ENCODE measurements at regions of chr3 and their contacts with region 1.

Region 1: GRCh38 chr3:22565393-22565792 is 637.7 kb upstream of the UBE2E2 start:
- DNase-seq: no peak
- ATAC-seq: no peak
- H3K4me3 ChIP-seq: no peak overlapping the region
- H3K27ac ChIP-seq: no peak overlapping the region
- H3K4me1 ChIP-seq: no peaks in the 10 kb centered on the region
- H3K27me3 ChIP-seq: no peaks in the 10 kb centered on the region
- CTCF ChIP-seq: no peak
- POLR2A ChIP-seq: no peak
- RAD21 ChIP-seq: no peak

Region 2: DNA sequence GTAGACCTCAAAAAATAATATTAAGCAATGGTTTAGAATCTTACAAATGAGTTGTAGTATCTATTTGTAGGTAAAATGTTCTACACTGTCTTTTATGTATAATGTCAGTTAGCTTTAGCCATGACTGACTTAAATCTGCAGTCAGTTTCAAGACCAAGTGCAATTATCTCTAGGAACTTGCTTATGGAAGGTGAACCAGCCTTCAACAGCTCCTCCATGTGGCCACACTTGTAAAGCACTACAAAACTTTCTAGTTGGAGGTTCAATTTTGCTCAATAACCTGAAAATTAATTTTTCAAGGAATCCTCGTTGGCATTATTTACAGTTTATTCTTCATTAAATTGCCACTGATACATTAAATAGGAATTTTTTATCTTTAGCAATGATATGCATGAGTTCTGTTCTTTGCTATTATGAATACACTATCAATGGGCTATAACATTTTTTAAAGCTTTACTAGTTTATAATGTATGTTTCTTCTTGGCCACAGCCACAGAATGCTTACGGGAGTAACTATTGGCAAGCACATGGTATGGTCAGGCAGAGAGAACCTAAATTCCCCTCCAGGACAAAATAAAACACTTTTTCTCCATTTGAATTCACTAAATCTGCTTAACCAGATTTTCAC is 322.4 kb after region 1 on chr3:
- CTCF ChIA-PET with region 1: interaction called, 3 read pairs
- POLR2A ChIA-PET with region 1: no interaction called
- RAD21 ChIA-PET with region 1: no interaction called
- intact Hi-C with region 1: loop called (anchors 2 kb)
- DNase-seq: peak; percentile 4
- ATAC-seq: 0 out of 2 replicates have a peak, but pooled peaks have one; percentile 44
- H3K4me3 ChIP-seq: no peak overlapping the region
- H3K27ac ChIP-seq: no peak overlapping the region
- H3K4me1 ChIP-seq: no peaks in the 10 kb centered on the region
- H3K27me3 ChIP-seq: peaks cover 3% of the 10 kb centered on the region; the same call in 1 of the 2 replicates
- CTCF ChIP-seq: peak in 2 of 3 experiments; percentile 42 to 49; a peak in 4 of 6 replicates
- POLR2A ChIP-seq: no peak
- RAD21 ChIP-seq: peak; percentile 40

Region 3: DNA sequence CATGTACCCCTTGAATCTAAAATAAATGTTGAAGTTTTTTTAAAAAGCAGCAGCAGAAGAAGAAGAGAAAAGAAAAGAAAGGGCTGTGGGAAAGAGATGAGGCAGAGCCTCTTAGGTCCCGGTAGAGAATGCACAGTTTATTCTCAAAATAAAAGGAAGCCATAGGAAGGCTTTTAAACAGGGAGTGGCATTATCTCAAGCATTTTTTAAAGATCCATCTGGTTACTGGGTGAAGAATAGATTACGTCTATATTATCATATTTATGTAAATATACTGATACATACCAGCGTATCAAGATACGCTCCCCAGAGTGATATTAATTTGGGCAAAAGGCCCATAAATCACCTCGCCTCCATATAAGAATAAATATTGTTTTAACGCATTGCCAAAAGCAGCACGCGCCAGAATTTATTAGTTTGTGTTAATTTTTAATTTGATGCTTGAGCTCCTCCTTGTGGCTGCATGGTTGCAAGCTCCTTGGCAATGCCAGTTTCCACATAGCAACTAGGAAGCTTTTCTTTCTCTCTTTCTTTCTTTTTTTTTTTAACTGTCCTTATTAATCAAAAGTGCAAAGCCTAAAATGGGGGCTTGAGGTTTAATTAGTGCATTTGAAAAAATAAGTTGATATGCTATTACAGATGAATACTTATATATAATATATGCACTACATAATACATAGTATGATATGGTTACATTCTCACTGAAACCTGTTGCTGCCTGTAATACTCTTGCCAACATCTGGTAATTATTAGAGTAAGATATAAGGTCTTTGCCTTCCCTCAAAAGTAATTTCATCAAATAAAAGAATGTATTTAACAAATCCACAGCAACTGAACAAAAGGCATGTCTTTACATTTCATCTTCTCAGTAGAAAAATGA is 395.0 kb after region 1 on chr3:
- CTCF ChIA-PET with region 1: interaction called, 5 read pairs
- POLR2A ChIA-PET with region 1: no interaction called
- RAD21 ChIA-PET with region 1: no interaction called
- intact Hi-C with region 1: loop called (anchors 2 kb)
- DNase-seq: peak; percentile 16
- ATAC-seq: peak; percentile 59; the same call in 1 of the 2 replicates
- H3K4me3 ChIP-seq: no peak overlapping the region
- H3K27ac ChIP-seq: no peak overlapping the region
- H3K4me1 ChIP-seq: no peaks in the 10 kb centered on the region
- H3K27me3 ChIP-seq: peaks cover 10% of the 10 kb centered on the region
- CTCF ChIP-seq: peak; percentile 41 to 69 (median 68); a peak in 5 of 6 replicates
- POLR2A ChIP-seq: no peak
- RAD21 ChIP-seq: peak; percentile 63

Measured in HCT116 (cell line).